Calu3 (cell line): ENCODE measurements at regions of chr6 and their contacts with region 1.

Region 1: GRCh38 chr6:107941627-107942026 is 16.4 kb downstream of the SEC63 start:
- DNase-seq: no peak
- H3K4me3 Mint-ChIP-seq: no peak overlapping the region
- H3K27ac Mint-ChIP-seq: no peak overlapping the region
- H3K4me1 Mint-ChIP-seq: peaks cover 30% of the 10 kb centered on the region
- H3K27me3 Mint-ChIP-seq: no peaks in the 10 kb centered on the region
- CTCF ChIP-seq: no peak

Region 2: GRCh38 chr6:107957909-107958688 is 16.5 kb after region 1 on chr6 and contains the start of gene SEC63:
- CTCF ChIA-PET with region 1: no interaction called
- intact Hi-C with region 1: loop called (anchors 2 kb)
- DNase-seq: peak; percentile 98
- H3K4me3 Mint-ChIP-seq: peak within 1 kb of the TSS; percentile 87
- H3K27ac Mint-ChIP-seq: peak within 1 kb of the TSS; percentile 89
- H3K4me1 Mint-ChIP-seq: no peaks in the 10 kb centered on the region
- H3K27me3 Mint-ChIP-seq: no peaks in the 10 kb centered on the region
- CTCF ChIP-seq: no peak
- total RNA-seq, gene SEC63: 106 and 135 TPM in 2 replicates

Region 3: GRCh38 chr6:108395297-108395696 is 453.7 kb after region 1 on chr6:
- CTCF ChIA-PET with region 1: no interaction called
- intact Hi-C with region 1: no loop called
- DNase-seq: no peak
- H3K4me3 Mint-ChIP-seq: no peak overlapping the region
- H3K27ac Mint-ChIP-seq: no peak overlapping the region
- H3K4me1 Mint-ChIP-seq: no peaks in the 10 kb centered on the region
- H3K27me3 Mint-ChIP-seq: no peaks in the 10 kb centered on the region
- CTCF ChIP-seq: no peak